ENCODE measurements at regions of chr13 and their contacts with region 1.

Region 1: GRCh38 chr13:33931397-33932311 is 113.7 kb downstream of the RFC3 start:
- DNase-seq: peak; percentile 41 to 78
- H3K4me3 ChIP-seq: no peak overlapping the region
- H3K4me3 Mint-ChIP-seq: no peak overlapping the region
- H3K27ac Mint-ChIP-seq: no peak overlapping the region
- H3K4me1 ChIP-seq: no peaks in the 10 kb centered on the region
- H3K4me1 Mint-ChIP-seq: no peaks in the 10 kb centered on the region
- H3K27me3 ChIP-seq: no peaks in the 10 kb centered on the region
- H3K27me3 Mint-ChIP-seq: no peaks in the 10 kb centered on the region
- CTCF ChIP-seq: peak; percentile 56 to 71

Region 2: GRCh38 chr13:33828431-33829129 is 103.1 kb before region 1 on chr13:
- CTCF ChIA-PET with region 1: no interaction called
- POLR2A ChIA-PET with region 1: no interaction called
- intact Hi-C with region 1: no loop called
- DNase-seq: no peak
- H3K4me3 ChIP-seq: no peak overlapping the region
- H3K4me3 Mint-ChIP-seq: no peak overlapping the region
- H3K27ac Mint-ChIP-seq: no peak overlapping the region
- H3K4me1 ChIP-seq: no peaks in the 10 kb centered on the region
- H3K4me1 Mint-ChIP-seq: no peaks in the 10 kb centered on the region
- H3K27me3 ChIP-seq: no peaks in the 10 kb centered on the region
- H3K27me3 Mint-ChIP-seq: no peaks in the 10 kb centered on the region
- CTCF ChIP-seq: no peak

Region 3: DNA sequence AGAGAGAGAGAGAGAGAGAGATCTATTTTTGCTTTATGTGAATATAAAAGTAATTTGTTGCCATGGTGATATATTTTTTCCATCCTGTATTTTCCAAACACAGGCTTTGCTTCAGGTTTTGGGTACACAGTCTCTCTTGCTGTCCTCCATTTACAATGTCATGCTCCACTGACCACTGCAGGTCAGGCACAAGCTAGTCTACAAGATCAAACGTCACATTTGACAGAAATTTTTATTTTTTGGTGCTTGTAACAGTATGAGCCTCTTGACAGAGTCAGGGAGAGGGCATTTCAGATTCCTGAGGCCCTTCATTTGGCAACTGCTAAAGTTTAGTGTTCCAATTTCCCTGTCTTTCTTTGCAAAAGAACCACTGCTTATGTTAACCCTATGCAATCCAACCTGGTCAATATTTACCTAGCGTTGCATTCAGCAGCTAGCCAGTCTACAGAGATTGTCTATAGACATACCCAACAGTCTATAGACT is 61.2 kb after region 1 on chr13:
- CTCF ChIA-PET with region 1: no interaction called
- POLR2A ChIA-PET with region 1: no interaction called
- intact Hi-C with region 1: loop called (anchors 5 kb)
- DNase-seq: no peak
- H3K4me3 ChIP-seq: no peak overlapping the region
- H3K4me3 Mint-ChIP-seq: no peak overlapping the region
- H3K27ac Mint-ChIP-seq: no peak overlapping the region
- H3K4me1 ChIP-seq: no peaks in the 10 kb centered on the region
- H3K4me1 Mint-ChIP-seq: peaks cover 4% of the 10 kb centered on the region
- H3K27me3 ChIP-seq: no peaks in the 10 kb centered on the region
- H3K27me3 Mint-ChIP-seq: no peaks in the 10 kb centered on the region
- CTCF ChIP-seq: no peak

Region 4: DNA sequence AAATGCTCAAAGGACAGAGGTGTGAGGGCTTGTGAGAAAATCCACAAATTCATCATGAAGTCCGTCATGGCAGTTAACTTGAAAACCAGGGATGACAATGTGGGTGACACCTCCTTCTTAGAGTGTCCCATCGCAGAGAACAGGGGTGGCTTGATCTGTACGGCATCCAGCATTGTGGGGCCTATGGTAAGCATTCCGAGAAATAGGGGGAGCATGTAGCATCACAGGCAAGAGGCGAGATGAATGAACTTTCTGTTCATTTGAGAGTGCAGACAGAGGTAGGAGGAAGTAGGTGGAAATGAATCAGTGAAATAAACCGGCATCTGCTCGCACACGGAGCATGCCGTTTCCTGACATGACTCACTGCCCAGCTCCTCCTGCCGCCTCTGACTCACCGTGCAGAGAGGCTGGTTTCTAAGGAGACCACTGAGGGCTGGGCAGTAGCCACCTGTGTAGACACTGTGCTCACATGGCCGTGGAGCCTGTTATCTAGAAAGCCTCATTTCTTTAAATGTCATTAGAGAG is 225.2 kb after region 1 on chr13:
- CTCF ChIA-PET with region 1: no interaction called
- POLR2A ChIA-PET with region 1: no interaction called
- intact Hi-C with region 1: loop called (anchors 2 kb)
- DNase-seq: peak; percentile 71 to 80
- H3K4me3 ChIP-seq: peak overlapping the region; percentile 17; the same call in 1 of the 2 replicates
- H3K4me3 Mint-ChIP-seq: peak overlapping the region; percentile 70
- H3K27ac Mint-ChIP-seq: peak overlapping the region; percentile 70
- H3K4me1 ChIP-seq: peaks cover 25% of the 10 kb centered on the region
- H3K4me1 Mint-ChIP-seq: peaks cover 28% of the 10 kb centered on the region
- H3K27me3 ChIP-seq: no peaks in the 10 kb centered on the region
- H3K27me3 Mint-ChIP-seq: no peaks in the 10 kb centered on the region
- CTCF ChIP-seq: no peak

Region 5: GRCh38 chr13:35157143-35157755 is 1225.6 kb after region 1 on chr13:
- CTCF ChIA-PET with region 1: no interaction called
- POLR2A ChIA-PET with region 1: no interaction called
- intact Hi-C with region 1: loop called (anchors 2 kb)
- DNase-seq: peak; percentile 40 to 52
- H3K4me3 ChIP-seq: no peak overlapping the region
- H3K4me3 Mint-ChIP-seq: no peak overlapping the region
- H3K27ac Mint-ChIP-seq: no peak overlapping the region
- H3K4me1 ChIP-seq: no peaks in the 10 kb centered on the region
- H3K4me1 Mint-ChIP-seq: peaks cover 8% of the 10 kb centered on the region
- H3K27me3 ChIP-seq: no peaks in the 10 kb centered on the region
- H3K27me3 Mint-ChIP-seq: no peaks in the 10 kb centered on the region
- CTCF ChIP-seq: peak; percentile 64 to 72

Region 6: DNA sequence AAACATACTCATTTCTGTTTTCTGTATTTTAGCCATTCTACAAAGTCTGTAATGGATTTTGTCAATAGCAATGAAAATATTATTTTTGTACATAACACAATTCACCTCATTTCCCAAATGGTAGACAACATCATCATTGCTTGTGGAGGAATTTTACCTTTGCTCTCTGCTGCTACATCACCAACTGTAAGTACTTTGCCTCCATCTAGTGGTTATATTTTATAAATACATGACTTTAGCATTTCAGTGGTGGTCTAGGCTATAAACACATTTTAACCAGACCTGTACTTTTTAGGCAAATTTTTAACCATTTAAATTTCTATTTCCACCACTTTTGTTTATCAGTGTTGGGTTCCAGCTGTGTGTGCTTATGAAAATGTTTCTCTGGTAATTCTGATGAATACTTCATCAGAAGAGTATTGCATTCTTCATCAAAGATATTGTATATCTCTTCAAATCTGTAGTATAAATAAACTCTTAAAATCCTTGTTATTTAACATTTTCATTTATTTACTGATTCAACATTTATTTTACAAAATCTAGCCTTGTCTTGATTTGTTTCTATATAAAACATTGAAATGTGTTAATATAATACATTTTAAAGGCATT is 1232.8 kb after region 1 on chr13:
- CTCF ChIA-PET with region 1: no interaction called
- POLR2A ChIA-PET with region 1: no interaction called
- intact Hi-C with region 1: loop called (anchors 2 kb)
- DNase-seq: peak in 1 of 2 experiments; percentile 7
- H3K4me3 ChIP-seq: no peak overlapping the region
- H3K4me3 Mint-ChIP-seq: no peak overlapping the region
- H3K27ac Mint-ChIP-seq: no peak overlapping the region
- H3K4me1 ChIP-seq: no peaks in the 10 kb centered on the region
- H3K4me1 Mint-ChIP-seq: no peaks in the 10 kb centered on the region
- H3K27me3 ChIP-seq: no peaks in the 10 kb centered on the region
- H3K27me3 Mint-ChIP-seq: no peaks in the 10 kb centered on the region
- CTCF ChIP-seq: peak; percentile 66 to 67